ENCODE measurements at regions of chr3 and their contacts with region 1.

Region 1: GRCh38 chr3:19213601-19214220 is 65.4 kb downstream of the KCNH8 start:
- DNase-seq: no peak
- ATAC-seq: peak; percentile 74
- H3K4me3 Mint-ChIP-seq: no peak overlapping the region
- H3K27ac Mint-ChIP-seq: no peak overlapping the region
- H3K4me1 Mint-ChIP-seq: peaks cover 4% of the 10 kb centered on the region
- H3K27me3 Mint-ChIP-seq: no peaks in the 10 kb centered on the region
- CTCF ChIP-seq: no peak

Region 2: DNA sequence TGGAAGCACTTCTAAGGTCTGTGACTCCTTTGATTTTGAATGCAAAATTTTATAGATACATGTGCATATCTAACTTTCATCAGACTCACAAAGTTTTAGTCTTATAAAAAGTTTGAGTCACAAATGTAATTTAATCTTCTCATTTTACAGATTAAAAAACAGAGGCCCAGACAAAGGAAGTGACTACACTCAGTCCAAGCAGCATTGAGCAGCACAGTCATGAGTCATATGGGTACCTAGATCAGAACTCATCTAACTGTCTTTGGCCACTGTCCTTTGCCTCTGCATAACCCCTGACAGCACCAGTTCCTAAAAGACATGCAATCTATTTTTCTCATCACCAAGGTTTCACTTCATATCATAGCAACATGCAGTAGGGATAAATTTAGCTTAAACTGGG is 276.1 kb before region 1 on chr3:
- CTCF ChIA-PET with region 1: no interaction called
- POLR2A ChIA-PET with region 1: no interaction called
- intact Hi-C with region 1: no loop called
- DNase-seq: no peak
- ATAC-seq: no peak
- H3K4me3 Mint-ChIP-seq: no peak overlapping the region
- H3K27ac Mint-ChIP-seq: no peak overlapping the region
- H3K4me1 Mint-ChIP-seq: no peaks in the 10 kb centered on the region
- H3K27me3 Mint-ChIP-seq: no peaks in the 10 kb centered on the region
- CTCF ChIP-seq: no peak

Region 3: GRCh38 chr3:19342389-19342788 is 128.7 kb after region 1 on chr3:
- CTCF ChIA-PET with region 1: interaction called, 39 read pairs
- POLR2A ChIA-PET with region 1: no interaction called
- intact Hi-C with region 1: loop called (anchors 1 kb)
- DNase-seq: no peak
- ATAC-seq: peak; percentile 40
- H3K4me3 Mint-ChIP-seq: peak overlapping the region; percentile 44
- H3K27ac Mint-ChIP-seq: peak overlapping the region; percentile 79
- H3K4me1 Mint-ChIP-seq: peaks cover 50% of the 10 kb centered on the region
- H3K27me3 Mint-ChIP-seq: no peaks in the 10 kb centered on the region
- CTCF ChIP-seq: no peak

Region 4: DNA sequence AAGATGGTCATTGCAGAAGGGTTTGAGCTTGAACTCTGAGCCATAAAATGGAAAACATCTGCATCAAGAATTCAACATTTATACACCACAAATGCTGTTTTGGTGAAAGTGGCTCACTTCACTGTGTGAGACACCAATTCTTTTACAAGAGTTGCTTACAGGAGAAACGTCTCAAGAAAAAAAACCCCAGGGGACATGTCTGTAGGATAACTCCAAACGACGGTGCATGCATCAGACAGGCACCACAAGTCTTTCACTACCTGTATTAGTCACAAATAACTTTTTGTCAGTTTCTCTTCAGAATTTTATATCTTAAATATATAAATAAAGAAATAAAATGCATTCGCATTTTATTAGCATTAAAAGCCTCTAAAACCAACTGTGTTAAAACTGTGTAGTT is 556.0 kb after region 1 on chr3:
- CTCF ChIA-PET with region 1: no interaction called
- POLR2A ChIA-PET with region 1: no interaction called
- intact Hi-C with region 1: no loop called
- DNase-seq: no peak
- ATAC-seq: no peak
- H3K4me3 Mint-ChIP-seq: no peak overlapping the region
- H3K27ac Mint-ChIP-seq: no peak overlapping the region
- H3K4me1 Mint-ChIP-seq: no peaks in the 10 kb centered on the region
- H3K27me3 Mint-ChIP-seq: no peaks in the 10 kb centered on the region
- CTCF ChIP-seq: no peak